ENCODE measurements at regions of chr2 and their contacts with region 1.

Region 1: GRCh38 chr2:11477994-11478393 is 12.0 kb upstream of the E2F6 start:
- DNase-seq: peak; percentile 90
- ATAC-seq: peak; percentile 66
- H3K4me3 ChIP-seq: no peak overlapping the region
- H3K27ac ChIP-seq: no peak overlapping the region
- H3K4me1 ChIP-seq: peaks cover 52% of the 10 kb centered on the region
- H3K27me3 ChIP-seq: no peaks in the 10 kb centered on the region
- CTCF ChIP-seq: peak; percentile 95
- EP300 ChIP-seq: peak in 1 of 2 experiments; percentile 17; a peak in 1 of 4 replicates
- POLR2A ChIP-seq: no peak
- RAD21 ChIP-seq: peak; percentile 97

Region 2: GRCh38 chr2:11488809-11489208 is 10.8 kb after region 1 on chr2:
- CTCF ChIA-PET with region 1: no interaction called
- POLR2A ChIA-PET with region 1: no interaction called
- in situ Hi-C with region 1: no loop called
- intact Hi-C with region 1: no loop called
- DNase-seq: peak; percentile 89
- ATAC-seq: peak; percentile 87
- H3K4me3 ChIP-seq: no peak overlapping the region
- H3K27ac ChIP-seq: peak overlapping the region; percentile 26
- H3K4me1 ChIP-seq: peaks cover 93% of the 10 kb centered on the region
- H3K27me3 ChIP-seq: no peaks in the 10 kb centered on the region
- CTCF ChIP-seq: no peak
- EP300 ChIP-seq: no peak
- POLR2A ChIP-seq: no peak
- RAD21 ChIP-seq: no peak

Region 3: DNA sequence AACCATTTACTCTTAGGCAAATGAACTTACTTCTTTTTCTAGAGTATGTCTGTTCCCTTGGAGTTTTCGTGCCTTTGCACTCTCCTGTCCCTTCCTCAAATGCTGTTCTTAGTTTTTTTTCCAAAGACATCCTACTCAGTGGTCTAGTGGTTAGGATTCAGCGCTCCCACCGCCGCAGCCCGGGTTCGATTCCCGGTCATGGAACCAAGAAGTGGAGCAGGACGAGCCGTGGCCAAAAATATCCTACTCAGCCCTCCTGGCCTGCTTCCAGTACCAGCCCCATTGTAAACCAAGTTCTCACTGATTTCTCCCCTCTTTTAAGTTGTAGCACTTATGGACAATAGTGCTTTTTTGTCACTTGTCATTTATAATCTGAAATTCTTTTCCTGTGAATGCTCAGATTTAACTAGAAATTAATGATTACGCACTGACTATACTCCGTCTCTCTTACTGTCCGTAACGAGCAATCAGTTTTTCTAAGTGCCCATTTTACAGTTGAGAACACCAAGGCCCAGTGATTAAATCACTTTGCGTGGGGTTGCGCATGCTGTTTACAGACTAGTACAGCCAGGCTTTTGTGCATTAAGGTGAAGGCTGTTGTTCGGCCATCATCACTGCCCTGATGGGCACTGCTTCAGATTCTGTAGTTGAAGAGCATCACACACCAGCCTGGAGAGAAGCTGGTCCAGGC is 73.7 kb after region 1 on chr2:
- CTCF ChIA-PET with region 1: no interaction called
- POLR2A ChIA-PET with region 1: interaction called, 3 read pairs
- in situ Hi-C with region 1: no loop called
- intact Hi-C with region 1: loop called (anchors 2 kb)
- DNase-seq: no peak
- ATAC-seq: no peak
- H3K4me3 ChIP-seq: no peak overlapping the region
- H3K27ac ChIP-seq: no peak overlapping the region
- H3K4me1 ChIP-seq: peaks cover 75% of the 10 kb centered on the region
- H3K27me3 ChIP-seq: no peaks in the 10 kb centered on the region
- CTCF ChIP-seq: no peak
- EP300 ChIP-seq: no peak
- POLR2A ChIP-seq: no peak
- RAD21 ChIP-seq: no peak